ENCODE measurements at regions of chr9 and their contacts with region 1.

Region 1: DNA sequence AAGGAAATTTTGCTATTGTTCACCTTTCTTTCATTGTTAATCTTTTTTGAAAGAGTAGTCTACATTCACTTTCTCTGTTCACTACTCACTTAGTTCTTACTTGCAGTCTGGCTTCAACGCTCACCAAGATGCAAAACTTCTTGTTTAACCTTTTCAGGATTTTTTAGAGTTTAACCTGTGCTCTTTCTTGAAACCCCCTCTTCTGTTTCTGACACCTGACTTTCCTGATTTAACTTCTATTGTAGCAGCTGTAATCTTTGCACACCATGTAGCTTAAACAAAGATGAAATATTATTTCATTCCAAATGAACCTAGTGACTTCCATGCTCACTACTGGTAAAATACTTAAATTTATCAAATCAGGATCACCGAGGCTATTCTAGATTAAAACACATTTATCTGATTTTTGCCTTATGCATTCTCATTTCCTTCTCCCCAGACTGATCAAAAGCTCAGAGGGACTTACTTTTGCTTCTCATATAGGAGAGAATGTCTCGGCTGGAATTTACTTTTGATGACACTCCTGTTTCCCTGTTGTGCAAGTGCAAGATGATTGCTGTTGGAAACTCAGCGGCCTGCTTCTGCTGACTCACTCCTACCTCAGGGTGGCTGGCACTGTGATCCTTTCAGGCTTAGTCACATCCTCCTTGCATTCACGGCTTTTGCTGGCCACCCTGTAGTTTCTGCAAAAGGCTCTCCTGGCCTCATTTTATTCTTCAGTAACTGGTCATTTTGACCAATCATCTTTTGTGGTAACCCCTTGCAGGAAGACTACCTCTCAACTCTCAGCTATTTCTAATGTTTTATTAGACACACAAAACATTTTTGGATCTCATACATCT is 109.3 kb upstream of the IFNE start:
- DNase-seq: peak; percentile 80 to 88
- H3K4me3 ChIP-seq: peak overlapping the region; percentile 50
- H3K27ac ChIP-seq: peak overlapping the region; percentile 98
- H3K4me1 ChIP-seq: peaks cover 32% of the 10 kb centered on the region
- H3K27me3 ChIP-seq: no peaks in the 10 kb centered on the region
- CTCF ChIP-seq: no peak

Region 2: GRCh38 chr9:21559424-21560280 is 31.8 kb before region 1 on chr9:
- CTCF ChIA-PET with region 1: no interaction called
- POLR2A ChIA-PET with region 1: interaction called, 16 read pairs
- intact Hi-C with region 1: loop called (anchors 5 kb)
- DNase-seq: peak; percentile 68 to 83
- H3K4me3 ChIP-seq: peak overlapping the region; percentile 80
- H3K27ac ChIP-seq: peak overlapping the region; percentile 77
- H3K4me1 ChIP-seq: peaks cover 9% of the 10 kb centered on the region; the same call in 1 of the 2 replicates
- H3K27me3 ChIP-seq: no peaks in the 10 kb centered on the region
- CTCF ChIP-seq: no peak

Region 3: DNA sequence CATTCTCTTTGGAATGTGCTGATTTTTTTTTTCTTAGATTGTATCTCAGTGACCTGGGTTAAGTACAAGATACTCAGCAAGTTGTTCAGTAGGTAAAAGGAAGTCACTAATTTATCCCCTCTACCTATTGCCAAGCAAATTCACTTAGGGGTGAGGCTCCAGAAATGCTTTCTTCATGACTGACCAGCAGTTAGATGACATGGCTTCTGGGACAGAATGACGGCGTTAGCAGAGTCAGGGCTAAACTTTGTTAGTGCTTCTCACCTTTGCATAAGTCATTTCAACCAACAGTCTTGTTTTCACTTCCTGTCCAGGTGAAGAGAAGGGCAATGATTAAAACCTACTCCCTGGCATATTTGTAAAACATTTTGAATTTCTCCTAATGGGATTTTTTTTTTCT is 190.8 kb after region 1 on chr9:
- CTCF ChIA-PET with region 1: no interaction called
- POLR2A ChIA-PET with region 1: interaction called, 5 read pairs
- intact Hi-C with region 1: loop called (anchors 1 kb)
- DNase-seq: peak; percentile 50 to 94
- H3K4me3 ChIP-seq: no peak overlapping the region
- H3K27ac ChIP-seq: peak overlapping the region; percentile 93
- H3K4me1 ChIP-seq: peaks cover 46% of the 10 kb centered on the region
- H3K27me3 ChIP-seq: no peaks in the 10 kb centered on the region
- CTCF ChIP-seq: no peak